Upper lobe of right lung (tissue), 1 donor: ENCODE measurements at regions of chr1 and their contacts with region 1.

Region 1: DNA sequence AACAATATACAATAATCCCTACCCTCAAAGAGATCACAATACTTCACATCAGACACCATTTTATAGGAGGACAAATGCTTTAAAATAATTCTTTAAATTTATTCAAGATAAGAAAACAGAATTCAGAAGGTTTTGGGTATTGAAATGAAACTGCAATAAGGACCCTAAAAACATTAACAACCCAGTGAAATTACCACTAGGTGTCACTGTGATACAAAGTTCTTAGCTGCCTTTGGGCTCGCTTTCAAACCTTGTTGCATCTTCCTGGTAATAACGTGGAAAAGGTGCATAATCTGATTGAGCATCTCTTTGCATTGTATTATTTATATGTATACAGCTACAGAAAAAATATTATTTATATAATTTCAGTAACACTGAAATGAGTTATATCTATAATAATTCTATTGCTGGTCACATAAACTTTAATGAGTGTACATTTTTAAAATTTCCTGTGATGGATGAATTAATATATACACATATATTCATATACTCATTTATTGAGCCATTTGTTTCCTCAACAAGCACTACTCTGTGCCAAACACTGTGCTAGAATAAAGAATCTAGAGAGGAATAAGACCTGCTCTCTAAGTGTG is 185.2 kb downstream of the FAF1 start:
- DNase-seq: no peak
- ATAC-seq: peak; percentile 70
- H3K4me3 ChIP-seq: no peak overlapping the region
- H3K27ac ChIP-seq: no peak overlapping the region
- H3K4me1 ChIP-seq: no peaks in the 10 kb centered on the region
- H3K27me3 ChIP-seq: no peaks in the 10 kb centered on the region
- CTCF ChIP-seq: peak; percentile 78

Region 2: DNA sequence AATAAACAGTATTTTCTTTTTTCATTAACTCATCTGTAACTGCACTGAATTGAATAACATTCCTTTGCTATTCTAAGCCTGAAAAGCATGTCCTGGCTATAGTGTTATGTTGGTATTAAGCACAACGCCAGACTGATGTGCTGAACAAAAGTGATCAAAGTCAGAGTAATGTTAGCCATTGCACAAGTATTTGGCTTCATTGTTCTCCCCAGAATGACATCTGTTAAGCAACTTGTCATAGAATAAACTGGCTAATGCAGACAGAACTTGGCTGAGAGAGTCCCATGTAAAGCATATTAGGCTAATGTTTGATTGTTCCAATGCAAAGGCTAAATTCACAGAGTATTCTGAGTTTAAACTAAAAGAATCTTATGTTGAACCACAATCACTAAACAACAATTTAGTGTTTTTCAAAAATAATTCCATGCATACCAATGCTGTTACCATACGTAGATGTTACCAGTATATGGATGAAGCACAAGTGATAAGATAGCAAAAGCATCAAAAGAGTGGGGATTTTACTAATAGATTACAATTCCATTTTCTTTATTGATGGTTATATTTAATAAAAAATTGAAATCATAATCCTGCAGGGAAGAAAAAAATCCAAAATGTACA is 116.3 kb before region 1 on chr1:
- intact Hi-C with region 1: no loop called
- DNase-seq: no peak
- ATAC-seq: no peak
- H3K4me3 ChIP-seq: no peak overlapping the region
- H3K27ac ChIP-seq: no peak overlapping the region
- H3K4me1 ChIP-seq: peaks cover 7% of the 10 kb centered on the region
- H3K27me3 ChIP-seq: no peaks in the 10 kb centered on the region
- CTCF ChIP-seq: no peak

Region 3: DNA sequence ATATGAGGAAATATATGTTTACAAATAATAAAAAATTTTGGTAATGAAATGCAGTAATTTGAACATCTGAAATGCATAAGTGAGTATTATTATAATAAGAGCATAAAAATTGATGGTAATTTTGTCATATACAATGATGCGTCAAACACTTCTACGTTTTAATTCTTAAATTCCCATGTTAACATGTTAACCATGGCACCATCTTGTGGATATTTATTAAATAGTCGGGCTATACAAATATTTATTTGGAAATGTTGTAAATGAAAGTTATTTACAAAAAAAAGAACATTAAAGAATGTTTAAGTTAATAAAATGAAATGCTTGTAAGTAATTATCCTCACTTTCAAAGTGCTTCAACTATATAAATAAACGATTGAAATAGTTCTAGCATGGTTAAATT is 270.0 kb after region 1 on chr1:
- intact Hi-C with region 1: loop called (anchors 10 kb)
- DNase-seq: no peak
- ATAC-seq: no peak
- H3K4me3 ChIP-seq: no peak overlapping the region
- H3K27ac ChIP-seq: no peak overlapping the region
- H3K4me1 ChIP-seq: no peaks in the 10 kb centered on the region
- H3K27me3 ChIP-seq: no peaks in the 10 kb centered on the region
- CTCF ChIP-seq: peak; percentile 44

Region 4: DNA sequence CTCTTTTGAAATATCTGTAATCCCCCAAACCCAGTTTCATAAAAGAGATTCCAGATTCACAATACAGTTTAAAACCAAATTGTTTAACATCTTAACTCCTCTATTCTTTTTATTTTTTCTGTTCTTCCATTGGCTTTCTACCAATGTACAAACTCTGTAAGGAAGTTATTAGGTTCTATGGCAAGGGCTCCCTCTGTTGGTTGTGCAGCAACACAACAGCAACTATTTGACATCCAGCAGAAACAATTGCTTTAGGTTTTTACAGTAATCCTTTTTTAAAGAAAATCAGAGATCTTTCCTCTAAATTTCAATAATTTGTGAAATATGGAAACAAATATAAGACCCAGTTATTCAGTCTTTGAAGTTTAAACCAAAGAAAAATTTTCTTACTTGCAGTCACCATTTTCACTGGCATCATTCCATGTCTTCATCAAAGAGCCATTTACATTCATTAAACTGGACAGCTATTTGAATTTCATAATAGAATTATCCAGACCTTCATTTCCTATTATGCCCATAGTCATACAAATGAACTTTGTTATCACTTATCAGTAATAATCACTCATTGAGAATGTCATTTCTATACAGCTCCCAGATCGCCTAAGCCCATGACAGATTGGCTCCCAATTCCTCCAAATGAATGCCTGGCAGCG is 414.7 kb after region 1 on chr1:
- intact Hi-C with region 1: loop called (anchors 5 kb)
- DNase-seq: no peak
- ATAC-seq: peak; percentile 85
- H3K4me3 ChIP-seq: no peak overlapping the region
- H3K27ac ChIP-seq: no peak overlapping the region
- H3K4me1 ChIP-seq: no peaks in the 10 kb centered on the region
- H3K27me3 ChIP-seq: no peaks in the 10 kb centered on the region
- CTCF ChIP-seq: peak; percentile 93